PC-9 (cell line): ENCODE measurements at regions of chr10 and their contacts with region 1.

Region 1: DNA sequence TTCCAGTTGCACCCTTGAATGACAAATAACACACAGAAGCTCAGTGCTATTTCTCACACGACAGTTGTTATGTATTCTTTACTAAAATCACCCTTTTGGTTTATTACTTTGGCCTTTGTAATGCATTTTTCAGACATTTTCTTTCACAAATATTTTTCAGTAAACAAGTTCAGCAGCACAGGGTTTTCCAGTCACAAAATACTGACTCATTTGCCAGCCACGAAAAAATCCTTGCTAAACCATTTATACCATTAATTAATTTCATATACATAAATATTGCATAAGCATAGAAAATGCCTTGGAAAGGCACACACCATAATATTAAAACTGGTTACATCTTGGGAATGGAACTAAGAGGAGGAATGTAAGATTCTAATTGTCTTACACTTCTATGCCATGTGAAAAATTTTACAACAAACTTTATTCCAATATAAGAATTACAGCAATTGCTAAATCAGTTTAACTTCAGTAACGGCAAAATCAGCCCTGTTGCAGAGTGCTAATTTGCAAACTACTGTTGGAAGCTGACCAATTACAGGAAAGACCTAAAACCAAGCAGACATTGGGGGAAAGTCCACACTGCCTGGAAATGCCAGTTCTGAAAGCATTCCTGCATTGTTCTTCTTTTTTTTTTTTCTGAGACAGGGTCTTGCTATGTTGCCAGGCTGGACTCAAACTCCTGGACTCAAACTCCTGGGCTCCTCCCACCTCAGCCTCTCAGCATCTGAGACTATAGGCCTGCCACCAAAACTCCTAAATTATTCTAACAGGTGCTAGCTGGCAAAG is 31.6 kb upstream of the PBLD start:
- DNase-seq: no peak
- H3K4me3 ChIP-seq: no peak overlapping the region
- H3K27ac ChIP-seq: no peak overlapping the region
- H3K4me1 ChIP-seq: no peaks in the 10 kb centered on the region
- H3K27me3 ChIP-seq: no peaks in the 10 kb centered on the region
- CTCF ChIP-seq: no peak

Region 2: DNA sequence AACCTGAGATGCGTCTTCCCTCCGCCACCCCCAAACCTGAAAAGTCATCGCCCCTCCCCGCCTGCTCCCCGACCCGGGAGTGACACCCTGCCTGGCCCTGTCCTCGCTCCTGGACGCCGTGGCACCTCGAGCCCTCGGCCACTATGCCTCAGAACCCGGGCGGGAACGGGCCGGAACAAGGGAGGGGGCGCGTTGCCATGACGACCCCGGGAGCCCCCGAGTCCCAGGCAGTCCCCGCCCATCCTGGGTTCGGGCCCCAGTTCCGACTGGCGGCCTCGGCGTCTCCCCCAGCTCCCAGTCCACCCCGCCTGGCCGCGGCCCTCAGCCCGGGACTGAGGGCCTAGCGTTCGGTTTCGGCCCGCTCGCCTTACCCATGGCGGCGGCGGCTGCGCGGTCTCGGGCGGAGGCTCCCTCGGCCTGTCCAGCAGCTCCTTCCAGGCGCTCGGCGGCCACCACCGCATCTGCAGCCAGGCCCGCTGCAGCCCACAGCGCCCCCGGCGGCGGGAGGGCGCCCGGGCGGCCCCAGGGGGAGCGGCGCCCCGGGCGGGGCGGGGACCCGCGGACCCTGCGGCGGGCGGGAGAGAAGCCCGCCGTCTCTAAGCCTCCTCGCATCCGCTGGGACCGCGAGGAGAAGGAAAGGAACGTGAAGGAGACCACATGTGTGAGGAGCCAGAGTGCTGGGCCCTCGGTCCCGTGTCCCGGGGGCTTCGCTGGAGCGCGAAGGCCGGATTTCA is 42.7 kb after region 1 on chr10 and contains the start of gene RUFY2:
- CTCF ChIA-PET with region 1: no interaction called
- POLR2A ChIA-PET with region 1: no interaction called
- intact Hi-C with region 1: no loop called
- DNase-seq: peak; percentile 45 to 88
- H3K4me3 ChIP-seq: peak within 1 kb of the TSS; percentile 66
- H3K27ac ChIP-seq: peak within 1 kb of the TSS; percentile 60
- H3K4me1 ChIP-seq: peaks cover 9% of the 10 kb centered on the region
- H3K27me3 ChIP-seq: no peaks in the 10 kb centered on the region
- CTCF ChIP-seq: peak; percentile 53
- total RNA-seq, gene RUFY2: 26.7 and 30.5 TPM in 2 replicates

Region 3: GRCh38 chr10:68759223-68759863 is 395.0 kb after region 1 on chr10:
- CTCF ChIA-PET with region 1: interaction called, 13 read pairs
- POLR2A ChIA-PET with region 1: no interaction called
- intact Hi-C with region 1: no loop called
- DNase-seq: no peak
- H3K4me3 ChIP-seq: no peak overlapping the region
- H3K27ac ChIP-seq: no peak overlapping the region
- H3K4me1 ChIP-seq: no peaks in the 10 kb centered on the region
- H3K27me3 ChIP-seq: no peaks in the 10 kb centered on the region
- CTCF ChIP-seq: no peak

Region 4: GRCh38 chr10:69186524-69186923 is 822.2 kb after region 1 on chr10:
- CTCF ChIA-PET with region 1: no interaction called
- POLR2A ChIA-PET with region 1: no interaction called
- intact Hi-C with region 1: no loop called
- DNase-seq: no peak
- H3K4me3 ChIP-seq: no peak overlapping the region
- H3K27ac ChIP-seq: no peak overlapping the region
- H3K4me1 ChIP-seq: peaks cover 6% of the 10 kb centered on the region
- H3K27me3 ChIP-seq: no peaks in the 10 kb centered on the region
- CTCF ChIP-seq: no peak